HepG2 (cell line): ENCODE measurements at regions of chr2 and their contacts with region 1.

Region 1: GRCh38 chr2:61764035-61764800 is 89.6 kb downstream of the FAM161A start:
- DNase-seq: peak; percentile 89
- ATAC-seq: peak; percentile 99
- H3K4me3 ChIP-seq: peak overlapping the region; percentile 53 to 85 (median 83)
- H3K27ac ChIP-seq: peak overlapping the region; percentile 77
- H3K4me1 ChIP-seq: peaks cover 7% of the 10 kb centered on the region; the same call in 1 of the 2 replicates
- H3K27me3 ChIP-seq: no peaks in the 10 kb centered on the region; a peak in 1 of 5 replicates
- CTCF ChIP-seq: no peak
- EP300 ChIP-seq: 0 out of 4 replicates have a peak, but pooled peaks have one; percentile 10 to 21
- POLR2A ChIP-seq: peak; percentile 71 to 86
- RAD21 ChIP-seq: no peak

Region 2: GRCh38 chr2:61694312-61695274 is 69.6 kb before region 1 on chr2:
- CTCF ChIA-PET with region 1: no interaction called
- POLR2A ChIA-PET with region 1: no interaction called
- in situ Hi-C with region 1: no loop called
- intact Hi-C with region 1: loop called (anchors 1 kb)
- DNase-seq: peak; percentile 65
- ATAC-seq: peak; percentile 96
- H3K4me3 ChIP-seq: peak overlapping the region; percentile 72 to 91 (median 90)
- H3K27ac ChIP-seq: no peak overlapping the region
- H3K4me1 ChIP-seq: peaks cover 27% of the 10 kb centered on the region
- H3K27me3 ChIP-seq: no peaks in the 10 kb centered on the region; a peak in 1 of 5 replicates
- CTCF ChIP-seq: peak; percentile 90
- EP300 ChIP-seq: no peak
- POLR2A ChIP-seq: peak; percentile 45 to 48; a peak in 1 of 4 replicates
- RAD21 ChIP-seq: peak; percentile 60